ENCODE measurements at regions of chr6 and their contacts with region 1.

Region 1: DNA sequence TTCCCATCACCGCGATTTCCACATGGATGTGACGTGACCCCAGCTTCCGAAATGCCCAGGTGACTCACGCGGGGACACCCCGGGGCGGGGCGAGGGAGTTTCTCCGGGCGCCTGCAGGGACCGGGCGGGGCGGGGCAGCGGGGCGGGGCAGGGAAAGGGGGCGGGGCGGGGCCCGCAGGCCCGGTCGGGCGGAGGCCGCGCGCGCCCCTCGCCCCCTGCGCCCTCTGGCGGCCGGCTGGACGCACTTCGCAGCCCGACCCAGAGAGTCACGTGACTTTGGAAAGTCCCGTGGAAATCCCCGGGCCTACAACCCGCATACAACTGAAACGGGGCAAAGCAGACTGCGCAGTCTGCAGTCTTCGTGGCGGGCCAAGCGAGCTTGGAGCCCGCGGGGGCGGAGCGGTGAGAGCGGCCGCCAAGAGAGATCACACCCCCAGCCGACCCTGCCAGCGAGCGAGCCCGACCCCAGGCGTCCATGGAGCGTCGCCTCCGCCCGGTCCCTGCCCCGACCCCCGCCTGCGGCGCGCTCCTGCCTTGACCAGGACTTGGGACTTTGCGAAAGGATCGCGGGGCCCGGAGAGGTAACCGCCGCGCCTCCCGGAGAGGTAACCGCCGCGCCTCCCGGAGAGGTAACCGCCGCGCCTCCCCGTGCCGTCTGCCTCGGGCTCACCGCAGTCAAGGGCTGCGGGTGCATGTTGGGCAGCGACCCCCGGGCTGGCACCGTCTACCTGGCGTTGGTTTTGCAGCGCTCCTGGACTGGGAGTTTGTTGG is at the start of gene TNFAIP3:
- DNase-seq: peak; percentile 92 to 97 (median 95)
- H3K4me3 ChIP-seq: peak within 1 kb of the TSS; percentile 98
- H3K4me3 Mint-ChIP-seq: peak within 1 kb of the TSS; percentile 93 to 99 (median 94)
- H3K27ac ChIP-seq: peak within 1 kb of the TSS; percentile 97
- H3K27ac Mint-ChIP-seq: peak within 1 kb of the TSS; percentile 86 to 99 (median 98)
- H3K4me1 ChIP-seq: peaks cover 46% of the 10 kb centered on the region
- H3K4me1 Mint-ChIP-seq: peaks cover 37 to 60% (median 51%) of the 10 kb centered on the region in 3 donors
- H3K27me3 ChIP-seq: no peaks in the 10 kb centered on the region
- H3K27me3 Mint-ChIP-seq: peaks cover 0 to 7% of the 10 kb centered on the region in 2 donors
- total RNA-seq, gene TNFAIP3: 267 to 298 TPM

Region 2: DNA sequence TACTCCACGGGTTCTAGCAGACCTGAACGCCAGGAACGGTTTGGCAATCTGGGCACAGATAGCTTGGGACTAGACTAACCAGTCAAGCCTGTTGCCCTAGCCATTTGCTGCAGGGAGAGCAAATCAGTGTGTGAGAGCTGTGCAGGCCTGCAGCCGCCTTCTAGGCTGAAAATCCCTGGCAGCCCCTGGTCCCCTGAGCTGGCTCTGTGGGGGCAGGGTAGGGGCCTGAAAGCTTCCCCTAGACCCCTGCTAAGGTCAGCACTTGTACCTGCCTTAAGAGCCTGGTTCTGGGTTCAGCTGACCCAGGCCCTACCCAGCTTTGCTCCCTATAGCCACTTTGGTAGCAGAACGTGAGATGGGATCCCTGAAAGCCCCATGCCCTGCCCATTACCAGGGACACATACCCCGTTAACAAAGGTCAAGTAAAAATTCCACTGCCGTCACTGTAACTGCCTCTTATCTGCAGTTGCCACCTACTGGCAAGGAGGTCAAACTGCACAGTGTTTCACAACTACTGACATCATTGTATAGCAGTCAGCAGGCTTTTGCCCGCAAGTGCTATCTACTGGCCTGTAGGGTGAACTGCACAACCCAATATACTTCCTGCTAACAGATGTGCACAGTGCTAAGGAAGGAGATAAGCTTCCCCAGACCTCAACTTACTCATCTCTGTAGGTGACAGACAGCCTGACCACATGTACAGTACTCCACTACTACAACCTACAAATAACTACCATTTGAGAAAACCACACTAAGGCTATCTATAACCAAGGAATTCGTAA is 277.8 kb before region 1 on chr6:
- CTCF ChIA-PET with region 1: no interaction called
- POLR2A ChIA-PET with region 1: no interaction called
- DNase-seq: peak; percentile 39 to 73 (median 45)
- H3K4me3 ChIP-seq: no peak overlapping the region
- H3K4me3 Mint-ChIP-seq: peak overlapping the region in 5 of 7 donors; percentile 0 to 61 (median 40)
- H3K27ac ChIP-seq: no peak overlapping the region
- H3K27ac Mint-ChIP-seq: peak overlapping the region in 5 of 8 donors; percentile 1 to 64 (median 24)
- H3K4me1 ChIP-seq: peaks cover 16% of the 10 kb centered on the region
- H3K4me1 Mint-ChIP-seq: peaks cover 18 to 20% (median 19%) of the 10 kb centered on the region in 3 donors
- H3K27me3 ChIP-seq: no peaks in the 10 kb centered on the region
- H3K27me3 Mint-ChIP-seq: peaks cover 4 to 40% of the 10 kb centered on the region in 2 donors

Region 3: DNA sequence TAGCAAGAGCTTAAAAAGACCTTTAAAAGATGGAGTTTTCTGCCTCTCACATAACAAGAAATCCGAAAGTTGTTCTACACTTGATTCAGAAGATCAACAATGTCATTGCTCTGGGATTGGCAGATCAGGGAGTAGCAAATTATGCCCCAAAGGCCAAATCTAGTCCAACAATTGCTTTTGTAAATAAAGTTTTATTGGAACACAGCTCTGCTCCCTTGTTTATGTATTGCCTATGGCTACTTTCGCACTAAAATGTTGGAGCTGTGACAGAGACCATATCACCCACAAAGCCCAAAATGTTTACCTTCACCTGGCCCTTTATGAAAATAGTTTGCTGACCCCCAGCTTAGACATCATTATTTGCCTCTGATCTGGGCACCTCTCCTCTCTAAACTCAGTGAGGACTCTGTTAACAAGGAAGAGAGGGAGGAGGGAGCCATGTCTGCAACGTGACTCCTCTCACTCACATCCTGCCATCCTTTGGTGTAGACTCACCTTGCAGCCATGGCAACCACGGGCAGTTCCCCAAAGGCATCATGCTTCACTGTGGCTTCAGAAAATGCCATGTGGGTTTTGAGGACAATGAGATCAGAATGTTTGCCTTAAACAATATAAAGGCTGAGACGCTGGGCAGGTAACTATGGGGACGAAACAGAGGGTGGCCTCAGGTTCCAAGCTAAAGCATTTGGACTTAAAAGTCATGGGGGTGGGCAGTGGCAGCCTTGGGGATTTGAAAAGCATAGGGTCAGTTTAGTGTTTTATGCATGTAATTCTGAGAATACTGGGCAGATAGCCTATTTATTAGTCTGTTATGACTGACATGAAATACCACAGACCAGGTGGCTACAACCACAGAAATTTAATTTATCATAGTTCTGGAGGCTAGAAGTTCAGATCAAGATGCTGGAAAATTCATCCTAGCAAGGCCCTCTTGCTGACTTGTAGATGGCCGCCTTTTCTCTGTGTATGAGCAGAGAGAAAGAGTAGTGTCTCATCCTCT is 149.7 kb before region 1 on chr6:
- CTCF ChIA-PET with region 1: interaction called, 85 read pairs
- POLR2A ChIA-PET with region 1: interaction called, 24 read pairs
- DNase-seq: peak; percentile 62 to 94 (median 82)
- H3K4me3 ChIP-seq: no peak overlapping the region
- H3K4me3 Mint-ChIP-seq: peak overlapping the region; percentile 30 to 73 (median 61)
- H3K27ac ChIP-seq: peak overlapping the region; percentile 60
- H3K27ac Mint-ChIP-seq: peak overlapping the region; percentile 92 to 100 (median 98)
- H3K4me1 ChIP-seq: peaks cover 36% of the 10 kb centered on the region
- H3K4me1 Mint-ChIP-seq: peaks cover 47 to 59% (median 55%) of the 10 kb centered on the region in 3 donors
- H3K27me3 ChIP-seq: no peaks in the 10 kb centered on the region
- H3K27me3 Mint-ChIP-seq: peaks cover 0 to 1% of the 10 kb centered on the region in 2 donors

Region 4: DNA sequence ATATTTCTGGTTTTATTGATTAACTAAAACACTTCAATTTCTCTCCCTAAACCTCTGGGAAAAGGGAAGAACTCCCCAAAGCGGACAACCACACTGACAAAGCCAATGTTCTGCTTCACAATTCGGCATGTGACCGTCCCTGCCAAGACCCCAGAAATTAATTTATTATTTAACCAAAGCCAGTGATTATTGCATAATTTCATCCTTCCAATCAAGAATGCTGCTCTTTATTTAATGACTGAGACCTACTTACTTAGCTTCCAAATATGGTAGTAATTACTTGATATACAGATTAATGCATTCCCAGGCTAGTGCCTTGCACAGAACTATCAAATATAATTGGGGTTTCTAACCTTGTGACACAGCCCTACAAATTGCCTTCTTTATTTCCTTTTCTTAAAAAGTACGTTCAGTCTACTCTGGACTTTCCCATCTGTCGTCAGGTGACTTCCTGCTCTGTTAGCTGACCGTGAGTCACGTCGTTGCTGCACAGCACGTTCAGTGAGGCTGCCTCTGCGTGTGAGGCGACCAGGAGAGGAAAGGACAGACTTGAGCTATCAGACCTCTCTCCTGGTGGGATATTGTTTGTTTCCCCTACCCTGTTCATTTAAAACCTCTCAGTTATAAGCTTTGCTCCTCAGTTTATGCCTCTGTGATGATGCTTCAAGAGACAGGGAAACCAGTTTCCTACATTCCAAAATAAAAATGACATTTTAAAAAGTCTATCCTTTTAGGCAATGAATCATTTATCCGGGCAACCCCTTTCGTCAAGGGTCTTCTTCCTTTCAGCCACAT is 55.8 kb before region 1 on chr6:
- CTCF ChIA-PET with region 1: interaction called, 11 read pairs
- POLR2A ChIA-PET with region 1: interaction called, 10 read pairs
- DNase-seq: peak; percentile 66 to 88 (median 75)
- H3K4me3 ChIP-seq: peak overlapping the region; percentile 21
- H3K4me3 Mint-ChIP-seq: peak overlapping the region; percentile 5 to 77 (median 65)
- H3K27ac ChIP-seq: peak overlapping the region; percentile 35
- H3K27ac Mint-ChIP-seq: peak overlapping the region; percentile 72 to 97 (median 94)
- H3K4me1 ChIP-seq: peaks cover 26% of the 10 kb centered on the region
- H3K4me1 Mint-ChIP-seq: peaks cover 22 to 43% (median 30%) of the 10 kb centered on the region in 3 donors
- H3K27me3 ChIP-seq: no peaks in the 10 kb centered on the region
- H3K27me3 Mint-ChIP-seq: peaks cover 0 to 4% of the 10 kb centered on the region in 2 donors

Region 5: GRCh38 chr6:137849181-137849980 is 17.7 kb before region 1 on chr6:
- CTCF ChIA-PET with region 1: no interaction called
- POLR2A ChIA-PET with region 1: no interaction called
- DNase-seq: no peak
- H3K4me3 ChIP-seq: no peak overlapping the region
- H3K4me3 Mint-ChIP-seq: no peak overlapping the region
- H3K27ac ChIP-seq: no peak overlapping the region
- H3K27ac Mint-ChIP-seq: no peak overlapping the region
- H3K4me1 ChIP-seq: peaks cover 5% of the 10 kb centered on the region
- H3K4me1 Mint-ChIP-seq: no peaks in the 10 kb centered on the region
- H3K27me3 ChIP-seq: no peaks in the 10 kb centered on the region
- H3K27me3 Mint-ChIP-seq: no peaks in the 10 kb centered on the region

Region 6: GRCh38 chr6:137878486-137879285 is 11.6 kb after region 1 on chr6:
- CTCF ChIA-PET with region 1: interaction called, 49 read pairs
- POLR2A ChIA-PET with region 1: interaction called, 6 read pairs
- DNase-seq: peak in 2 of 5 donors; percentile 45 to 52
- H3K4me3 ChIP-seq: no peak overlapping the region
- H3K4me3 Mint-ChIP-seq: peak overlapping the region; percentile 43 to 94 (median 62)
- H3K27ac ChIP-seq: no peak overlapping the region
- H3K27ac Mint-ChIP-seq: peak overlapping the region; percentile 24 to 94 (median 68)
- H3K4me1 ChIP-seq: peaks cover 44% of the 10 kb centered on the region
- H3K4me1 Mint-ChIP-seq: peaks cover 51 to 95% (median 93%) of the 10 kb centered on the region in 3 donors
- H3K27me3 ChIP-seq: no peaks in the 10 kb centered on the region
- H3K27me3 Mint-ChIP-seq: peaks cover 0 to 42% of the 10 kb centered on the region in 2 donors

Region 7: DNA sequence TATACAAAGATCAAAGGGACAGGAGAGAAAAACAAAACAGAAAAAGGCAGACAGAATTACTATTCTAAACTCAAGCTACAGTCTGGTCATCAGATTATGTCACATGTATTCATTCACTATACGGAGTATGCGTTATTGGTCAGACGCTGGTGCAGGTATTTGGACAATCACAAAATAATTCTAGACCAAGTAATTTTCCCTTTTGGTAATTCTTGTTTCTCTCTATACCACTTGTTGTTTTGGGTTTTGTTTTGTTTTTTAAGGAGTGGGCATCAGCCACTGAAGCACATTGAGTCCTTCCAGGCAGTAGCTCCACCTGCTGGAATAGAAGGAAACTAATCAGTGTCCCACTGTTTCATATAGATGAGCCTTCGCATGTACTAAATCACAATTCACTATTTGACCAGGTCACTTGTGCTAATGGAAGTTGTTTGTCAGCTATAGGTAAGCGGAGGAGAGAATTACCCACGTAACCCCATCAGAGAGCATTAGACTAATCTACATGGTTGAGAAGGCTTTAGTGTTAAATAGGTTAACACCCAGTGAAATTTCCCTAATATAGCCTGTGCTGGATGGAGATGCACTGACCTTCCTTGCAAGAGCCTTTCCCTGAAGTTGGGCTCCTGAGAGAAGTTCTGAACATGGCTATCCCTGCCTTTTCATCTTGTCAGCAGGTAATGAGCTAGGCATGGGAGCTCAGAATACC is 77.8 kb after region 1 on chr6:
- CTCF ChIA-PET with region 1: interaction called, 24 read pairs
- POLR2A ChIA-PET with region 1: interaction called, 5 read pairs
- DNase-seq: peak in 2 of 5 donors; percentile 3 to 39
- H3K4me3 ChIP-seq: no peak overlapping the region
- H3K4me3 Mint-ChIP-seq: peak overlapping the region in 1 of 7 donors; percentile 22
- H3K27ac ChIP-seq: no peak overlapping the region
- H3K27ac Mint-ChIP-seq: peak overlapping the region in 6 of 8 donors; percentile 7 to 79 (median 64)
- H3K4me1 ChIP-seq: peaks cover 10% of the 10 kb centered on the region
- H3K4me1 Mint-ChIP-seq: peaks cover 21 to 27% (median 27%) of the 10 kb centered on the region in 3 donors
- H3K27me3 ChIP-seq: no peaks in the 10 kb centered on the region
- H3K27me3 Mint-ChIP-seq: no peaks in the 10 kb centered on the region

Measured in CD8-positive, alpha-beta memory T cell (primary cell).